H1 (cell line): ENCODE measurements at regions of chr14 and their contacts with region 1.

Region 1: GRCh38 chr14:64338616-64339316 is 44.6 kb upstream of the ESR2 start:
- DNase-seq: peak; percentile 92 to 96
- H3K4me3 ChIP-seq: peak overlapping the region; percentile 74 to 93 (median 81)
- H3K27ac ChIP-seq: peak overlapping the region; percentile 88
- H3K4me1 ChIP-seq: peaks cover 6 to 14% (median 9%) of the 10 kb centered on the region in 4 experiments; a peak in 6 of 7 replicates
- H3K27me3 ChIP-seq: no peaks in the 10 kb centered on the region
- CTCF ChIP-seq: no peak
- EP300 ChIP-seq: no peak
- POLR2A ChIP-seq: peak; percentile 44 to 85
- RAD21 ChIP-seq: no peak

Region 2: DNA sequence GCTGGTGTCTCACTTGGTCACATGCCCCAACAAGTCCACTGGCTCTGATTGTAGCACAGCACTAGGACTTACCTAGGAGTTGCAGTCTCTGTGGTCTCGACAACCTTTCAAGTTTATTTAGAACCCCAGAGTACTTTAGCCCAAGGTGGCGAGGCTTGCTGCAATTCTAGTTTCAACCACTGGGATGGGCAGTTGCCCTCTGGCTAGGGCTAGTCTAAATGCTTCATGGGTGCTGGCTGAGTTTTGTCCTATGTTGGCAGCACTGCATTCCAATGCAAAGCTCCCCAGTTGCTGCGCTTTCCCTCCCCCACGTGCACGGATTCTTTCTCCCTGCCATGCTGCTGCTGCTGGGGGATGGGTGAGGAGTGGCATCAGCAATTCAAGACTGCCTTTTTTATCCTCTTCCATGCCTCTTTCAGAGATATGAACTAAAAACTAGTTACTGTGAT is 278.1 kb before region 1 on chr14:
- CTCF ChIA-PET with region 1: no interaction called
- POLR2A ChIA-PET with region 1: no interaction called
- DNase-seq: peak; percentile 82 to 85
- H3K4me3 ChIP-seq: peak overlapping the region in 1 of 4 experiments; percentile 5; a peak in 1 of 8 replicates
- H3K27ac ChIP-seq: peak overlapping the region; percentile 57
- H3K4me1 ChIP-seq: peaks cover 0 to 12% (median 5%) of the 10 kb centered on the region in 4 experiments; a peak in 3 of 7 replicates
- H3K27me3 ChIP-seq: no peaks in the 10 kb centered on the region
- CTCF ChIP-seq: peak; percentile 60 to 92 (median 79)
- EP300 ChIP-seq: peak; percentile 64 to 91; a peak in 2 of 3 replicates
- POLR2A ChIP-seq: no peak
- RAD21 ChIP-seq: peak; percentile 81 to 84

Region 3: GRCh38 chr14:64170181-64170580 is 168.6 kb before region 1 on chr14:
- CTCF ChIA-PET with region 1: no interaction called
- POLR2A ChIA-PET with region 1: no interaction called
- DNase-seq: no peak
- H3K4me3 ChIP-seq: no peak overlapping the region
- H3K27ac ChIP-seq: no peak overlapping the region
- H3K4me1 ChIP-seq: no peaks in the 10 kb centered on the region
- H3K27me3 ChIP-seq: no peaks in the 10 kb centered on the region
- CTCF ChIP-seq: no peak
- EP300 ChIP-seq: no peak
- POLR2A ChIP-seq: no peak
- RAD21 ChIP-seq: no peak

Region 4: GRCh38 chr14:64349741-64350490 is 11.2 kb after region 1 on chr14:
- CTCF ChIA-PET with region 1: interaction called, 4 read pairs
- POLR2A ChIA-PET with region 1: interaction called, 11 read pairs
- DNase-seq: no peak
- H3K4me3 ChIP-seq: no peak overlapping the region
- H3K27ac ChIP-seq: no peak overlapping the region
- H3K4me1 ChIP-seq: no peaks in the 10 kb centered on the region
- H3K27me3 ChIP-seq: no peaks in the 10 kb centered on the region
- CTCF ChIP-seq: no peak
- EP300 ChIP-seq: no peak
- POLR2A ChIP-seq: no peak
- RAD21 ChIP-seq: no peak